ENCODE measurements at regions of chr17 and their contacts with region 1.

Region 1: GRCh38 chr17:47188876-47189731 is at the start of gene CDC27:
- DNase-seq: peak; percentile 88
- ATAC-seq: peak; percentile 93
- H3K4me3 ChIP-seq: peak within 1 kb of the TSS; percentile 89
- H3K27ac ChIP-seq: peak within 1 kb of the TSS; percentile 96
- H3K4me1 ChIP-seq: peaks cover 4% of the 10 kb centered on the region
- H3K27me3 ChIP-seq: no peaks in the 10 kb centered on the region
- CTCF ChIP-seq: no peak
- EP300 ChIP-seq: no peak
- POLR2A ChIP-seq: peak; percentile 73
- RAD21 ChIP-seq: no peak
- polyA plus RNA-seq, gene CDC27: 23.2 to 27.2 TPM

Region 2: GRCh38 chr17:47066841-47067682 is 122.0 kb before region 1 on chr17:
- CTCF ChIA-PET with region 1: no interaction called
- POLR2A ChIA-PET with region 1: no interaction called
- RAD21 ChIA-PET with region 1: no interaction called
- SMC1A ChIA-PET with region 1: no interaction called
- in situ Hi-C with region 1: no loop called
- intact Hi-C with region 1: no loop called
- DNase-seq: peak; percentile 55
- ATAC-seq: peak; percentile 98
- H3K4me3 ChIP-seq: peak overlapping the region; percentile 91
- H3K27ac ChIP-seq: peak overlapping the region; percentile 93
- H3K4me1 ChIP-seq: peaks cover 3% of the 10 kb centered on the region
- H3K27me3 ChIP-seq: no peaks in the 10 kb centered on the region
- CTCF ChIP-seq: peak in 1 of 3 experiments; percentile 25; a peak in 2 of 6 replicates
- EP300 ChIP-seq: 0 out of 4 replicates have a peak, but pooled peaks of 1 of the 2 experiments have one; percentile 45
- POLR2A ChIP-seq: peak; percentile 99
- RAD21 ChIP-seq: no peak

Region 3: GRCh38 chr17:47117386-47117785 is 71.7 kb before region 1 on chr17:
- CTCF ChIA-PET with region 1: no interaction called
- POLR2A ChIA-PET with region 1: no interaction called
- RAD21 ChIA-PET with region 1: no interaction called
- SMC1A ChIA-PET with region 1: no interaction called
- in situ Hi-C with region 1: no loop called
- intact Hi-C with region 1: no loop called
- DNase-seq: no peak
- ATAC-seq: no peak
- H3K4me3 ChIP-seq: no peak overlapping the region
- H3K27ac ChIP-seq: no peak overlapping the region
- H3K4me1 ChIP-seq: no peaks in the 10 kb centered on the region
- H3K27me3 ChIP-seq: no peaks in the 10 kb centered on the region
- CTCF ChIP-seq: no peak
- EP300 ChIP-seq: no peak
- POLR2A ChIP-seq: no peak
- RAD21 ChIP-seq: no peak

Region 4: DNA sequence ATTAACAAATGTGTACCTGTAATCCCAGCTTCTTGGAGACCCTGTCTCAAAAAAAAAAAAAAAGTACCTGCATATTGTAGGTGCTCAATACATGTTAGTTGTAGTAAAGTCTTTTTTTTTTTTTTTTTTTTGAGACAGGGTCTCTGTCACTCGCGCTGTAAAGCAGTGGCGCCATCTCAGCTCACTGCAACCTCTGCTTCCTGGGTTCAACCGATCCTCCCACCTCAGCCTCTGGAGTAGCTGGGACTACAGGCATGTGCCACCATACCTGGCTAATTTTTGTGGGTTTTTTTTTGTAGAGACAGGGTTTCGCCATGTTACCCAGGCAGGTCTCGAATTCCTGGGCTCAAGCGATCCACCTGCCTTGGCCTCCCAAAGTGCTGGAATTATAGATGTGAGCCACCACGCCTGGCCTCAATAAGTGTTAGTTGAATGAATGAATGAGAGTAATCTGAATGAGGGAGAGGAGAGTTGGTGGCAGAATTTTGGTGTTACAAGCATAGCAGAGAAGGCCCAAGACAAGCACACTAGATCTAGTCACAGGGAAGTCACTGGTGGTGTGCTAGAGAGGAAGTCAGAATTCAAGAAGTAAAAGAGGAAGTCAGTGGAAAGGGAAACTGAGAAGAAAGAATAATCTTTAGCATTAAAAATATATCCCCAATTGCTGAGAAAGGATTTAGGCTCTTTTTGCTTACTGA is 10.7 kb after region 1 on chr17:
- CTCF ChIA-PET with region 1: interaction called, 15 read pairs
- POLR2A ChIA-PET with region 1: interaction called, 46 read pairs
- RAD21 ChIA-PET with region 1: interaction called, 21 read pairs
- SMC1A ChIA-PET with region 1: interaction called, 70 read pairs
- in situ Hi-C with region 1: no loop called
- intact Hi-C with region 1: loop called (anchors 2 kb)
- DNase-seq: no peak
- ATAC-seq: peak; percentile 44
- H3K4me3 ChIP-seq: no peak overlapping the region
- H3K27ac ChIP-seq: peak overlapping the region; percentile 87
- H3K4me1 ChIP-seq: peaks cover 33% of the 10 kb centered on the region
- H3K27me3 ChIP-seq: no peaks in the 10 kb centered on the region
- CTCF ChIP-seq: no peak
- EP300 ChIP-seq: no peak
- POLR2A ChIP-seq: no peak
- RAD21 ChIP-seq: no peak

Region 5: DNA sequence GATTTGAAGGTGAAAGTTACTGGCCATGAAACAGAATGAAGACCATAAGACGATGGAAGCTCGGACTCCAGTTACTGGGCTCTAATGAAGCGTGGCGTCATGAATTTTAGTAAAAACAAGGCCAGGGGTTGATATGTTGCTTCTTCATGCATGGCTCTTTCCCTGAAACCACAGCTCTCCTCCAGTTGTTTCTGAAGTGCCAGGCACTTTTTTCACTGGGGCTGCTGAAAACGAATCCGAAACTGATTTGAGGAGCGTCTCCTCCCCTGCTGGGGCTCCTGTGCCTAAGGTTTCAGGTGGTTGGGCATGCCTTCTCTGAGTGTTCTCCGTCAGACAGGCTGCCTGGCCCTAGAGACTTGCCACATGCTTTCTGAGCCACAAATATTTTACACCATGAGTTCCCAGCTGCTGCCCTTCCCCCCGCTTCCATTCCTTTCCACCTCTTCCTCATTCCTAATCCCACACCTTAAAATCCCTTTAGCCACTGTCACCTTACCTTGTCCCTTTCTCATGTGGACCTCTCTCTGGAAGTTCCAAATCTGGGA is 16.4 kb after region 1 on chr17:
- CTCF ChIA-PET with region 1: interaction called, 15 read pairs
- POLR2A ChIA-PET with region 1: interaction called, 46 read pairs
- RAD21 ChIA-PET with region 1: interaction called, 21 read pairs
- SMC1A ChIA-PET with region 1: interaction called, 70 read pairs
- in situ Hi-C with region 1: no loop called
- intact Hi-C with region 1: loop called (anchors 2 kb)
- DNase-seq: peak; percentile 78
- ATAC-seq: peak; percentile 85
- H3K4me3 ChIP-seq: peak overlapping the region; percentile 2; the same call in 1 of the 2 replicates
- H3K27ac ChIP-seq: peak overlapping the region; percentile 68
- H3K4me1 ChIP-seq: peaks cover 64% of the 10 kb centered on the region
- H3K27me3 ChIP-seq: no peaks in the 10 kb centered on the region
- CTCF ChIP-seq: no peak
- EP300 ChIP-seq: peak in 1 of 2 experiments; percentile 39; a peak in 1 of 4 replicates
- POLR2A ChIP-seq: peak; percentile 31; the same call in 1 of the 2 replicates
- RAD21 ChIP-seq: no peak

Region 6: GRCh38 chr17:47279062-47279736 is 90.1 kb after region 1 on chr17:
- CTCF ChIA-PET with region 1: no interaction called
- POLR2A ChIA-PET with region 1: interaction called, 11 read pairs
- RAD21 ChIA-PET with region 1: no interaction called
- SMC1A ChIA-PET with region 1: no interaction called
- in situ Hi-C with region 1: no loop called
- intact Hi-C with region 1: no loop called
- DNase-seq: peak; percentile 92
- ATAC-seq: peak; percentile 91
- H3K4me3 ChIP-seq: peak overlapping the region; percentile 57
- H3K27ac ChIP-seq: peak overlapping the region; percentile 79
- H3K4me1 ChIP-seq: peaks cover 40% of the 10 kb centered on the region
- H3K27me3 ChIP-seq: no peaks in the 10 kb centered on the region
- CTCF ChIP-seq: no peak
- EP300 ChIP-seq: peak; percentile 19 to 70; a peak in 2 of 4 replicates
- POLR2A ChIP-seq: no peak
- RAD21 ChIP-seq: no peak; the same call in 1 of the 2 replicates

Region 7: GRCh38 chr17:47335101-47335936 is 146.2 kb after region 1 on chr17:
- CTCF ChIA-PET with region 1: no interaction called
- POLR2A ChIA-PET with region 1: no interaction called
- RAD21 ChIA-PET with region 1: no interaction called
- SMC1A ChIA-PET with region 1: no interaction called
- in situ Hi-C with region 1: no loop called
- intact Hi-C with region 1: no loop called
- DNase-seq: no peak
- ATAC-seq: no peak
- H3K4me3 ChIP-seq: no peak overlapping the region
- H3K27ac ChIP-seq: no peak overlapping the region
- H3K4me1 ChIP-seq: no peaks in the 10 kb centered on the region
- H3K27me3 ChIP-seq: no peaks in the 10 kb centered on the region
- CTCF ChIP-seq: no peak
- EP300 ChIP-seq: no peak
- POLR2A ChIP-seq: no peak
- RAD21 ChIP-seq: no peak

Measured in GM12878 (cell line).